ENCODE measurements at regions of chr5 and their contacts with region 1.

Region 1: DNA sequence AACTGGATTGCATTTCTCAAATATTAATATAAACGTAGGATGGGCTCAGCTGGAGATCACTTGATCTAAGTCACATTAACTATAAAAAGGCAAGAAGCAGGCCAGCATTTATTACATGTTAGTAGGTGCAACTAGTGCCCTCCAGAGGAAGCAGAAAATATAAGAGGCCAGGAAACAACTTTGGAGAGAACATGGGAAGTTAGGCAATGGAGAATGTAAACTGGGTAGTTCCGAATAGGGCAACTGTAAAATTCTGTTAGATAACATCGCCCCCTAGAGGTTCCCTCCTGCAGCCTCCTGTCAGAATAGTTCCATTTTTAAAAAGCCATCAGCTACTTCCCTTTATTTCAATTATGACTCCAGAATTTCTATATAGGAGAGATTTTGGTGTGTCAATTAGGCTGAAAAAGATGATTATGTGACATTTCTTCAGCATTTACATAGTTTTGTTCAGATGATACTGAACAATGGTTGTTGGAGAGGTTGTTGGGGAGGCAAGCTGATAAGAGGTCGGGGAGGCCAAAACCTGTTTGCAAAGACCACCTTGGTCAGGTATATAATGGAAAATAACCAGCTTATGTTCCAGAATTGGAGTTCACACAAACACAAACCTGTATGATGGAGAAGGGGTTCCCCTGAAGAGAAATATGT is 22.4 kb downstream of the CCL28 start:
- DNase-seq: peak in 3 of 4 donors; percentile 42 to 89 (median 77)
- ATAC-seq: peak; percentile 100
- H3K4me3 ChIP-seq: no peak overlapping the region
- H3K27ac ChIP-seq: no peak overlapping the region
- H3K4me1 ChIP-seq: peaks cover 0 to 7% of the 10 kb centered on the region in 2 donors
- H3K27me3 ChIP-seq: no peaks in the 10 kb centered on the region
- CTCF ChIP-seq: peak; percentile 86 to 87

Region 2: DNA sequence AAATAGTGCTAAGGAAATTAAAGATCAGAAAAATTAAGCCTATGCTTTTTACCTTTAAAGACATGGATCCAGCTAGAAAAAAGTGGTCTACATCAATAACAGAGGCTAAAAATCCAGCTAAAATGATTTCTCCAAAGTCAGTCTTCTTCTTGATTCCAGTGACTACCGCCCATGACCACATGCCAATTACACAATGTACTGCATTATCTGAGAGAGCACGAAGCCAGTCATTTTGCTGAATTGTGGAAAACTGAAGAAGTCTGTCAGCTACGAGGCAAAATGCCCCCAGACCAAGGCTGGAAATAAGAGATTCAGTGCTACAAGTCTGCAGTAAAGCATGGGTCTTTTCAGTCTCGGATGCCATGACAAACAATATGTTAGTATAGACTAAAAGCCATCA is 63.8 kb after region 1 on chr5:
- intact Hi-C with region 1: no loop called
- DNase-seq: no peak
- ATAC-seq: no peak
- H3K4me3 ChIP-seq: no peak overlapping the region
- H3K27ac ChIP-seq: no peak overlapping the region
- H3K4me1 ChIP-seq: no peaks in the 10 kb centered on the region
- H3K27me3 ChIP-seq: no peaks in the 10 kb centered on the region
- CTCF ChIP-seq: no peak

Region 3: GRCh38 chr5:43484106-43484849 is 94.5 kb after region 1 on chr5:
- intact Hi-C with region 1: loop called in 1 of 2 experiments (anchors 10 kb)
- DNase-seq: peak; percentile 87 to 92 (median 88)
- ATAC-seq: peak; percentile 87
- H3K4me3 ChIP-seq: peak overlapping the region; percentile 67 to 68
- H3K27ac ChIP-seq: peak overlapping the region; percentile 97 to 99
- H3K4me1 ChIP-seq: peaks cover 0 to 23% of the 10 kb centered on the region in 2 donors
- H3K27me3 ChIP-seq: no peaks in the 10 kb centered on the region
- CTCF ChIP-seq: peak; percentile 56 to 62

Measured in left lung (tissue), 14 donors.